ENCODE measurements at regions of chr12 and their contacts with region 1.

Region 1: GRCh38 chr12:51341259-51342007 is 5.0 kb downstream of the CELA1 start:
- DNase-seq: peak; percentile 80
- ATAC-seq: peak; percentile 78
- H3K4me3 Mint-ChIP-seq: no peak overlapping the region
- H3K27ac Mint-ChIP-seq: peak overlapping the region; percentile 32
- H3K4me1 Mint-ChIP-seq: peaks cover 22% of the 10 kb centered on the region
- H3K27me3 Mint-ChIP-seq: no peaks in the 10 kb centered on the region

Region 2: GRCh38 chr12:51047655-51048540 is 293.5 kb before region 1 on chr12 and contains the start of gene LETMD1:
- CTCF ChIA-PET with region 1: interaction called, 14 read pairs
- POLR2A ChIA-PET with region 1: no interaction called
- intact Hi-C with region 1: loop called (anchors 1 kb)
- DNase-seq: peak; percentile 94
- ATAC-seq: peak; percentile 98
- H3K4me3 Mint-ChIP-seq: peak within 1 kb of the TSS; percentile 92
- H3K27ac Mint-ChIP-seq: peak within 1 kb of the TSS; percentile 92
- H3K4me1 Mint-ChIP-seq: peaks cover 23% of the 10 kb centered on the region
- H3K27me3 Mint-ChIP-seq: no peaks in the 10 kb centered on the region
- total RNA-seq, gene LETMD1: 69.6 to 79.6 TPM

Region 3: GRCh38 chr12:51246254-51246853 is 95.1 kb before region 1 on chr12:
- CTCF ChIA-PET with region 1: interaction called, 20 read pairs
- POLR2A ChIA-PET with region 1: no interaction called
- intact Hi-C with region 1: no loop called
- DNase-seq: peak; percentile 58
- ATAC-seq: peak; percentile 74
- H3K4me3 Mint-ChIP-seq: peak overlapping the region; percentile 36
- H3K27ac Mint-ChIP-seq: peak overlapping the region; percentile 74
- H3K4me1 Mint-ChIP-seq: peaks cover 49% of the 10 kb centered on the region
- H3K27me3 Mint-ChIP-seq: no peaks in the 10 kb centered on the region

Region 4: GRCh38 chr12:51262758-51263177 is 78.7 kb before region 1 on chr12:
- CTCF ChIA-PET with region 1: interaction called, 71 read pairs
- POLR2A ChIA-PET with region 1: no interaction called
- intact Hi-C with region 1: no loop called
- DNase-seq: peak; percentile 65
- ATAC-seq: no peak
- H3K4me3 Mint-ChIP-seq: no peak overlapping the region
- H3K27ac Mint-ChIP-seq: no peak overlapping the region
- H3K4me1 Mint-ChIP-seq: peaks cover 19% of the 10 kb centered on the region
- H3K27me3 Mint-ChIP-seq: peaks cover 2% of the 10 kb centered on the region

Region 5: GRCh38 chr12:51293696-51294095 is 47.7 kb before region 1 on chr12:
- CTCF ChIA-PET with region 1: interaction called, 15 read pairs
- POLR2A ChIA-PET with region 1: no interaction called
- intact Hi-C with region 1: loop called in 1 of 2 experiments (anchors 1 kb)
- DNase-seq: no peak
- ATAC-seq: peak; percentile 81
- H3K4me3 Mint-ChIP-seq: no peak overlapping the region
- H3K27ac Mint-ChIP-seq: peak overlapping the region; percentile 85
- H3K4me1 Mint-ChIP-seq: peaks cover 24% of the 10 kb centered on the region
- H3K27me3 Mint-ChIP-seq: no peaks in the 10 kb centered on the region

Region 6: DNA sequence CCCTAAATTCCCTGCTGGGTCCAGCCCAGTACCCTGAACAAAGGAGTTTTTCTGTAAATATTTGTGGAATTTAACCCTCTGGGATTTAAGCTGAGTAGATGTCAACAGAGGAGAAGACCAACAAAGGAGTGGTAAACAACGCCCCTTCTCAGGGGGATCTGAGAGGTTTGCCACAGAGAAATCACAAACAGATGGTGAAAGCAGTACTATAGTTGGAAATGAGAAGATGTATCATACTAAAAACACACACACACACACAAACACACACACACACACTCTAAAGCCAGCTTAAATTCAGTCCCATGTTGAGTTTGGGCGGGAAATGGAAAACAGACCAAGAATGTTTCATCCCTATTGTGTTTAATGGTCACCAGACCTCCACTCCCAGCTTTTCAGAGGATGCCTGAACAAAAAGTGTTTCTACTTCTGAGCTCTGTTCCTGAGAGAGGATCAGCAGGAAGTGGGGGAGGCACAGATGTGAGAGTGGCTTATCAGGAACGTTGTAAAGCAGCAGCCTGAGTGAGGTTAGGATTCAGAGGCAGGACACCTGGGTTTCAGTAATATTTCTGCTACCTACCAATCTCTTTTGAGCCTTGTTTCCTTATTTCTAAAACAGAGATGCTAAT is 20.6 kb before region 1 on chr12:
- CTCF ChIA-PET with region 1: interaction called, 22 read pairs
- POLR2A ChIA-PET with region 1: no interaction called
- intact Hi-C with region 1: no loop called
- DNase-seq: no peak
- ATAC-seq: no peak
- H3K4me3 Mint-ChIP-seq: peak overlapping the region; percentile 87
- H3K27ac Mint-ChIP-seq: peak overlapping the region; percentile 79
- H3K4me1 Mint-ChIP-seq: peaks cover 75% of the 10 kb centered on the region
- H3K27me3 Mint-ChIP-seq: no peaks in the 10 kb centered on the region

Region 7: GRCh38 chr12:51351913-51352532 is 10.6 kb after region 1 on chr12:
- CTCF ChIA-PET with region 1: interaction called, 25 read pairs
- POLR2A ChIA-PET with region 1: no interaction called
- intact Hi-C with region 1: no loop called
- DNase-seq: peak; percentile 68
- ATAC-seq: peak; percentile 79
- H3K4me3 Mint-ChIP-seq: no peak overlapping the region
- H3K27ac Mint-ChIP-seq: no peak overlapping the region
- H3K4me1 Mint-ChIP-seq: peaks cover under 1% of the 10 kb centered on the region
- H3K27me3 Mint-ChIP-seq: no peaks in the 10 kb centered on the region